ENCODE measurements at regions of chr12 and their contacts with region 1.

Region 1: DNA sequence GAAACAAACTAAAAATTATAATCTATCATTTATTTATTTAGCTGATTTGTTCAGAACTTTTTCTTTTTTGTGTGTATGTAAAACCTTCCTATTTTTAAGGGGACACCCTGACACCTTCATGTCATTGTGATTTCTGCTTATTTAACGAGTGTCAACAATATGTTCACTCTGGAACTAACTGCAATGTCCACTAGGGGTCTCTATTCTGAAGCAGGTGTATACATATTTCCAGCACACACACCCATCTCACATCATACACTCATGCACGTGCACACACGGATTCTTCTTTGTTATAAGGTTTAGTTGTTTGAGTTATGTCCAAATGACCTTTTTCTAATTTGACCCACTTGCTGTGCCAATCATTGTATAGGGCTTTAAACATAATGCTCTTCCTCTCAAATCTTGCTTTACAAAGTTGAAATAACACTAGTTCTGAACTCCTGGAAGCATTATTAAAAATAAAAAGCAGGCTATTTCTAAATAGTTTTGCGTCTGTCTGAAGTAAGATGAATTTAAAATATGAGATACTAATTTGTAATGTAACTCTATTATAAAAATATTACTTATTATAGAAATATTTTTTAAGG is 15.5 kb downstream of the E2F7 start:
- DNase-seq: no peak
- H3K4me3 Mint-ChIP-seq: no peak overlapping the region
- H3K27ac Mint-ChIP-seq: no peak overlapping the region
- H3K4me1 Mint-ChIP-seq: no peaks in the 10 kb centered on the region
- H3K27me3 Mint-ChIP-seq: no peaks in the 10 kb centered on the region

Region 2: GRCh38 chr12:77060136-77060882 is 10.4 kb after region 1 on chr12:
- CTCF ChIA-PET with region 1: interaction called, 14 read pairs
- DNase-seq: no peak
- H3K4me3 Mint-ChIP-seq: no peak overlapping the region
- H3K27ac Mint-ChIP-seq: no peak overlapping the region
- H3K4me1 Mint-ChIP-seq: peaks cover 38% of the 10 kb centered on the region
- H3K27me3 Mint-ChIP-seq: no peaks in the 10 kb centered on the region

Region 3: DNA sequence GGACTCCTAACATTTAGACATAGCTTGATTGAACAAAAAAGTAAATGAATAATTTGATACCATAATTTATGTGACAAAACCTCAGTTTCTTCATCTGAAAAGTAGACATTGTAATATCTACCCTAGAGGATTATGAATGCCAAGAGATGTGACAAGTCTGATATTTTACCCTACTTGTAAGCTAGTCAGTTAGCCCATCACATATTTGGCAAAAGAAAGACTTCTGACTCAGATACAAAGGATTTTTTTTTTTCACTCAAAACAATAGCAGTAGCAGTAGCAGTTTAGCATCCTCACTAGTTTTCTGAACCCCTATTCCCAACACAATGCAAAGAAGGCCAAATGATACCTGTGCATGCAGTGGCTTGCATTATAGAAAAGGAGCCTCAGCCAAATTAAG is 392.8 kb after region 1 on chr12:
- CTCF ChIA-PET with region 1: no interaction called
- DNase-seq: no peak
- H3K4me3 Mint-ChIP-seq: no peak overlapping the region
- H3K27ac Mint-ChIP-seq: no peak overlapping the region
- H3K4me1 Mint-ChIP-seq: no peaks in the 10 kb centered on the region
- H3K27me3 Mint-ChIP-seq: no peaks in the 10 kb centered on the region

Measured in activated naive CD4-positive, alpha-beta T cell treated with anti-CD3 and anti-CD28 coated beads, Interleukin-2, amount 10 ng/mL, durations not matched to agents 7 days and 5 days (primary cell).